Heart left ventricle (tissue), 16 donors: ENCODE measurements at regions of chr11 and their contacts with region 1.

Region 1: DNA sequence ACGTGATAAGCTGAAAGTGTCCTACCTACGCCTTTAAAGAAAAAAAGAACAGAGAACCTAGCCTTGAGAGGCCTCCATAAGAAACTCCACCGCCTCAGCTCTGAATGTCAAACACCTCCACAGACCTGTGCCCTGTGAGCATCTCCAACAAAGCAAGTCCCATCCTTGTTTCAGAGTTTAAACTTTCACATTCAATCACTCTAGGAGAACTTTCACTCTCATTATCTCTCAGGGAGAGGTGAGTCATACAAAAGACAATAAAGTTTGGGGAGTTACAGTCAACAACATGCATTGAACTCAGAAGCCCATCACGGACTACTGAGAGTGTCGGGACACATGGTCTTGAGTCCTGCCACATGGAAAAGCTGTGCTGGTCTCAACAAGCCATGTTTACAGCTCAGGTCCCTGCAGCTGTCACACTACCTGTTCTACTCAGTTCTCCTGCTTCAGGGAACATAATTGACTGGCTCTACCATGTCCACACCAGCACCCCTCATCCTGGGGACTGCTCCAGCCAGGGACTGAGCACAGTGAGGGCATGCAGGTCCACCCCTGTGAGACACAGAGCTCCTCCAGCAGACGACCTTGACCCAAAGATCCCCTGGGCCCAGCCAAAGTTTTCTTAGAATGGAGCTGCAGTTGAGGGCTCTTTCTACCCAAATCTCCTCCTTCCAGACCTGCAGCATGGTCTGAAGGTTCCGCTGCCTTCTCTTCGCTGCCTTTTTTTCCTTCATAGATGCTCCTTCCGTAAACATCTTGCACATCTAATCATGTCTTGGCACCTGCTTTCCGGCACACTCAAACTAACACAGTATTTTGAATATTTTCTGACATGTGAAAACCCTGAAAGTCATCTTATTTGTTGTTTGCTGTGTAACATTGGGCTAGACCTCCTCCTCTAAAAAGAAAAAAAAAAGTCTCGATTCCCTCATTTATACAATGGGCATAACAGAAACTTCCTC is 114.9 kb downstream of the ETS1 start:
- DNase-seq: no peak
- ATAC-seq: peak in 1 of 4 donors; percentile 9
- H3K4me3 ChIP-seq: peak overlapping the region in 1 of 12 donors; percentile 6
- H3K27ac ChIP-seq: peak overlapping the region in 7 of 12 donors; percentile 0 to 83 (median 35)
- H3K4me1 ChIP-seq: peaks cover 17 to 100% (median 90%) of the 10 kb centered on the region in 12 donors
- H3K27me3 ChIP-seq: no peaks in the 10 kb centered on the region
- CTCF ChIP-seq: no peak
- POLR2A ChIP-seq: no peak

Region 2: DNA sequence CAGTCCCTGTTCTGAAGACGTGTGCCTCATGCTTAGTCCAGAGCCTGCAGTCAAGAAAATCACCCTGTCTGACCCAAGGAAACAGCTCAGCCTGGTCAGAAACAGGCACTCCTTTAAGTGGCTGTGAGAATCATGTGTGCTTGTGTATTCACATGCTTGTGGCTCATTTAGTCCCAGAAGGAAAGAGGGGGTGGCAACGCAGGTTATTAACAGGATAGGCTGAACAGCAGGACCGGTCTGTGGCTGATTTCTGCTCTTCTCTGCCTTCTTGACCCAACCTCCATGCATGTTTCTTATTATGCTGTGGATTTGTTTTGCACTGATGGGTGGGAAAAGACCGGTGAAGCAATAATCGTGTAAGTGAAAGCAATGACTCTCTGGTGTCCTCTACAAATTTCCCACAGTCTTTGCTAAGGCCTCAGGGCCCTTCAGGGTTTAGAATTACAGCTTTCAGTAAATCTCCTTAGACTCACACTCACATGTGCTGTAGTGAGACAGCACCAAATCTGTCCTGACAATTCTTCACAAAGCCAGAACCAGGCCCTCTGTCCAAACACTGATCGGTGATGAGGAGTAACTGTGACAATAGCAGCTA is 173.2 kb before region 1 on chr11:
- intact Hi-C with region 1: loop called in 6 of 10 experiments (anchors 5 to 10 kb)
- DNase-seq: no peak
- ATAC-seq: peak in 3 of 4 donors; percentile 30 to 38 (median 30)
- H3K4me3 ChIP-seq: no peak overlapping the region
- H3K27ac ChIP-seq: peak overlapping the region; percentile 3 to 76 (median 50)
- H3K4me1 ChIP-seq: peaks cover 0 to 54% (median 29%) of the 10 kb centered on the region in 12 donors
- H3K27me3 ChIP-seq: no peaks in the 10 kb centered on the region
- CTCF ChIP-seq: no peak
- POLR2A ChIP-seq: no peak

Region 3: GRCh38 chr11:128412847-128413791 is 59.3 kb before region 1 on chr11:
- intact Hi-C with region 1: loop called in 1 of 10 experiments (anchors 10 kb)
- DNase-seq: no peak
- ATAC-seq: no peak
- H3K4me3 ChIP-seq: no peak overlapping the region
- H3K27ac ChIP-seq: peak overlapping the region in 2 of 12 donors; percentile 4 to 33
- H3K4me1 ChIP-seq: peaks cover 0 to 44% (median 10%) of the 10 kb centered on the region in 12 donors
- H3K27me3 ChIP-seq: no peaks in the 10 kb centered on the region
- CTCF ChIP-seq: no peak
- POLR2A ChIP-seq: no peak

Region 4: DNA sequence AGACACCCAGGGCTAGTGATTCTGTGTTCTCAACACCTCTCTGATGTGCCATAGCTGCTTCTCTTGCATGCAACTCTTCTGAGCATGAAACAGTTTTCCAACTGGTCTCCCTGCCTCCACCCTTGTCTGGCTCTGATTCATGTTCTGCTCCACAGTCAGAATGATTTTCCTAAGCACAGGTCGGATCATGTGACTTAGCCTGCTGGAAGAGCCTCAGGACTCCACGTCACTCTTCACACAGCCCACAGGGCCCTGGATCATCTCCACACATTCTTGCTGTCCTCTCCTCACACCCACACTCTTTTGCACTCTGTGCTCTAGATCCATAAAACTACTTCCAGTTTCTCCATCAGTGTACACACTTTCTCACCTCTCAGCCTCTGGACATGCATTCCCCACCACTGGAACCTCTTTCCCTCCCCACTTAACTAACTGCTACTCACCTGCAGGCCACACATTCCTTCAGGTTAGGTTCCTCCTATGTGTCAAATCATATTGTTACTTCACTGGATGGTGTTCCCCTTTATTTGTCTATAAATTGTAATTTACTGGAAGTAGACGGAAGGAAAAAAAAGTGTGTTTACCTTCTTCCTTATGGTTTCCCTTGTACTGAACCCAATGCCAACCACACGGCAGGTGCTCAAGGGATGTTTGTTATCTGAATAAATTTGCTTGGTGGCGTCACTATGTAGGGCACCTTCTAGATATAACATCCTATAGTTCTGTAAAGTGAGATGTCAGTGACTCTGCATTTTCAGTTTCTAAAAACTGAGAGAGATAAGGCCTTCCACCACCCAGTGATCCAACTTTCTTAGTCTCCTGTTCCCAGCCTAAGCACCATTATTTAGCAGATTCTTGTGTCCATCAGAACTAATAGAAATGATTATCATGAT is 18.7 kb before region 1 on chr11:
- intact Hi-C with region 1: no loop called
- DNase-seq: peak in 4 of 5 donors; percentile 61 to 76 (median 69)
- ATAC-seq: peak; percentile 53 to 85 (median 76)
- H3K4me3 ChIP-seq: no peak overlapping the region
- H3K27ac ChIP-seq: peak overlapping the region in 5 of 12 donors; percentile 4 to 56 (median 39)
- H3K4me1 ChIP-seq: peaks cover 3 to 66% (median 33%) of the 10 kb centered on the region in 12 donors
- H3K27me3 ChIP-seq: no peaks in the 10 kb centered on the region
- CTCF ChIP-seq: no peak
- POLR2A ChIP-seq: no peak

Region 5: DNA sequence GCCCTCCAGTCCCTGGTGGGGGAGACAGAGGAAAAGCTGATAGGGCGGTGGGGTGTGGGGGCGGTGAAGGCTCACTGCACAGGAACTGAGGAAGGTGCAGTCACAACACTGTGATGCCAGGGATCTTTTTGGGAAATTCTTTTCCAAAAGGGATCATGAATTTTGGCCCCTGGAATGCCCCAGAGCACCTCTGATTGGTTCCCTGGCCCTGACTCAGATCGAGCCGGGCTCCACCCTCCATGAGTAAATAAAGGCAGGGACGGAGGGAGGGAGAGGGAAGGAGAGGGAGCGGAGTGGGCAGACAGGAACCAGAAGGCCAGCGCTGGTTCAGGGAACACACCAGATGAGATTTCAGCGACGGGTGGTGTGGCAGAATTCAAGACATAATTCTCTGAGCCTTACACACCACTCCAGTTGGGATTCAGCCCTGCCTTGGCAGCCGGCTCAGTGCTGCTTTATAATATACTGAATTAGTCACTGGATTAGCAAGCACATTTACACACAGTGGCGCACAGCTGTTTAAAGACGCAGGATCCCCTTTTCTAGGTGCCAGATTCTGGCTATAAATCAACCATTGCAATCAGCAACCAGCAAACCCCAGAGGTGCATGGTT is 34.7 kb after region 1 on chr11:
- intact Hi-C with region 1: loop called in 2 of 10 experiments (anchors 5 to 10 kb)
- DNase-seq: peak; percentile 69 to 91 (median 83)
- ATAC-seq: peak; percentile 79 to 96 (median 88)
- H3K4me3 ChIP-seq: peak overlapping the region in 11 of 12 donors; percentile 4 to 47 (median 37)
- H3K27ac ChIP-seq: peak overlapping the region; percentile 60 to 96 (median 80)
- H3K4me1 ChIP-seq: peaks cover 24 to 100% (median 100%) of the 10 kb centered on the region in 12 donors
- H3K27me3 ChIP-seq: no peaks in the 10 kb centered on the region
- CTCF ChIP-seq: no peak
- POLR2A ChIP-seq: peak in 1 of 2 donors; percentile 75

Region 6: DNA sequence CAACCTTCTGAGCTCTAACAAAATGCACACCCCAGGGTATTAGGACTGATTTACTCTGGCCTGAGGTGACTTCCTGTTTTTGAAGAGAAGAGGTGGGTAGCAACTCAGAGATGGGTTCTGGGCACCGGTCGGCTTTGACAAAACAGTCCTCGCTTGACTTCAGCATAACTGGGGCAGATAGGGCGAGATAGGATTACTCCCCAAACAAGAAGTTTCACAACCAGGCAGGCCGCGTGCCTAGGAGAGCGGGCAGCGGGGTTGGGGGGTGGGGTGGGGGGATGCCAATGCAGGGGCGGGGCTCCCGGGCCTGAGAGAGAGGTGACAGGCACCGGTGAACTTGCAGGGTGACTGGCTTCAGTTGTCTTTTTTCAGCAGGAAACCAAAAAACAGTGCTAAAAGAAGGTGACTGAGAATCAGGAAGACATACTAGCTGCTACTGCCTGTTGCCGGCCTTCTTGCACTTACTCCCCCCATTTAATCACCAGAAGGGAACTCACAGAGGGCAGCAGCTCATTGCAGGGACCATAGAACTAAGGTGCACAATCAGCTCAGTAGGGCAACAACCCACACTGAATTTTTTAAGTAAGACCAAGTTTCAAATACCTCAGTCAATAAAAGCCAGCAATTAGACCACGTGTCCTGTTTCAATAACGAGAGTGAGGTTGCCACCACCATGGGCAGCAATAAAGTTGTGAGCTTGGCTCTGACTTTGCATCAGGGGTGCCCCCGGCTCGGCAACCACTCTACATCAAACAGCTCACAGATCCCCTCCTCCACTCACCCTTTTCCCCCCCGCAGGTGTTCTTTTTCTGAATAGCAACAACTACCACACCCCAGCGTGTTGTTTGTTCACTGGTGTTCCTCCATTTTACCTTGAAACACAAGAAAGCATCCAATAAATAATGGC is 152.1 kb after region 1 on chr11:
- intact Hi-C with region 1: loop called in 1 of 10 experiments (anchors 10 kb)
- DNase-seq: no peak
- ATAC-seq: no peak
- H3K4me3 ChIP-seq: no peak overlapping the region
- H3K27ac ChIP-seq: peak overlapping the region in 1 of 12 donors; percentile 81
- H3K4me1 ChIP-seq: peaks cover 0 to 76% (median 14%) of the 10 kb centered on the region in 12 donors
- H3K27me3 ChIP-seq: no peaks in the 10 kb centered on the region
- CTCF ChIP-seq: no peak
- POLR2A ChIP-seq: no peak